Ovary (tissue), 10 donors: ENCODE measurements at regions of chr6 and their contacts with region 1.

Region 1: GRCh38 chr6:89080542-89081422 is at the start of gene PNRC1:
- DNase-seq: peak; percentile 100
- H3K4me3 ChIP-seq: peak within 1 kb of the TSS; percentile 64
- H3K27ac ChIP-seq: peak within 1 kb of the TSS; percentile 100
- H3K4me1 ChIP-seq: peaks cover 3% of the 10 kb centered on the region
- H3K27me3 ChIP-seq: no peaks in the 10 kb centered on the region
- CTCF ChIP-seq: peak in 2 of 3 donors; percentile 20 to 26
- EP300 ChIP-seq: peak; percentile 60
- POLR2A ChIP-seq: peak; percentile 100
- total RNA-seq, gene PNRC1: 311 to 507 (median 427) TPM

Region 2: DNA sequence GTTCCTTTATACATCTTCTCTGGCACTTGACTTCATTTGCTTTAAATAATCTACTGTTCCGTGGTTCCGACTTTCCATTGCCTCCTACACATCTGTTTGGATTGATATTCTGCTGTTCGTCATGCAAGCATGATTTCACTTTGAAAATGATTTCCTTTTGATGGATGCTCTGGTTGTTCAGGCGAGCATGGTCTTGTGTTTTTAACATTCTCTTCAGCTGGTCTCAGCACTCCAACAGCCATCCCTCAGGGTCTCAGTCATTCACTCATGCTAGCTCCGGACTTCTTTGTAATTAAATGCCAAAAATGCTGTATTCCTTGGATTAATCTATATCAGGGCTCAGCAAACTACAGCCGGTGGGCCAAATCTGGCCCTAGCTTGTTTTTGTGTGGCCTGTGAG is 1060.3 kb before region 1 on chr6:
- intact Hi-C with region 1: no loop called
- DNase-seq: no peak
- H3K4me3 ChIP-seq: no peak overlapping the region
- H3K27ac ChIP-seq: no peak overlapping the region
- H3K4me1 ChIP-seq: no peaks in the 10 kb centered on the region
- H3K27me3 ChIP-seq: no peaks in the 10 kb centered on the region
- CTCF ChIP-seq: no peak
- EP300 ChIP-seq: no peak
- POLR2A ChIP-seq: no peak

Region 3: GRCh38 chr6:89035252-89036106 is 45.3 kb before region 1 on chr6:
- intact Hi-C with region 1: loop called in 2 of 4 experiments (anchors 2 kb)
- DNase-seq: peak; percentile 89 to 98 (median 92)
- H3K4me3 ChIP-seq: no peak overlapping the region
- H3K27ac ChIP-seq: peak overlapping the region; percentile 74 to 85
- H3K4me1 ChIP-seq: peaks cover 2% of the 10 kb centered on the region
- H3K27me3 ChIP-seq: no peaks in the 10 kb centered on the region
- CTCF ChIP-seq: peak in 1 of 3 donors; percentile 23
- EP300 ChIP-seq: peak; percentile 98
- POLR2A ChIP-seq: peak; percentile 44

Region 4: GRCh38 chr6:89145787-89146646 is 65.2 kb after region 1 on chr6 and contains the start of gene PM20D2:
- intact Hi-C with region 1: loop called in 2 of 4 experiments (anchors 10 kb)
- DNase-seq: peak; percentile 65 to 82 (median 75)
- H3K4me3 ChIP-seq: peak within 1 kb of the TSS; percentile 77
- H3K27ac ChIP-seq: peak within 1 kb of the TSS; percentile 82 to 97
- H3K4me1 ChIP-seq: peaks cover 6% of the 10 kb centered on the region
- H3K27me3 ChIP-seq: no peaks in the 10 kb centered on the region
- CTCF ChIP-seq: no peak
- EP300 ChIP-seq: no peak
- POLR2A ChIP-seq: peak; percentile 55
- total RNA-seq, gene PM20D2: 18.4 to 32.0 (median 27.7) TPM

Region 5: GRCh38 chr6:89352278-89353117 is 271.7 kb after region 1 on chr6 and contains the start of gene UBE2J1:
- intact Hi-C with region 1: loop called in 1 of 4 experiments (anchors 1 kb)
- DNase-seq: peak; percentile 86 to 93 (median 91)
- H3K4me3 ChIP-seq: peak within 1 kb of the TSS; percentile 70
- H3K27ac ChIP-seq: peak within 1 kb of the TSS; percentile 93 to 99
- H3K4me1 ChIP-seq: peaks cover 11% of the 10 kb centered on the region
- H3K27me3 ChIP-seq: no peaks in the 10 kb centered on the region
- CTCF ChIP-seq: peak in 1 of 3 donors; percentile 18
- EP300 ChIP-seq: peak; percentile 14
- POLR2A ChIP-seq: peak; percentile 80
- total RNA-seq, gene UBE2J1: 25.3 to 48.6 (median 35.8) TPM